Activated CD4-positive, alpha-beta memory T cell treated with anti-CD3 and anti-CD28 coated beads for 36 hours (primary cell): ENCODE measurements at regions of chr6 and their contacts with region 1.

Region 1: DNA sequence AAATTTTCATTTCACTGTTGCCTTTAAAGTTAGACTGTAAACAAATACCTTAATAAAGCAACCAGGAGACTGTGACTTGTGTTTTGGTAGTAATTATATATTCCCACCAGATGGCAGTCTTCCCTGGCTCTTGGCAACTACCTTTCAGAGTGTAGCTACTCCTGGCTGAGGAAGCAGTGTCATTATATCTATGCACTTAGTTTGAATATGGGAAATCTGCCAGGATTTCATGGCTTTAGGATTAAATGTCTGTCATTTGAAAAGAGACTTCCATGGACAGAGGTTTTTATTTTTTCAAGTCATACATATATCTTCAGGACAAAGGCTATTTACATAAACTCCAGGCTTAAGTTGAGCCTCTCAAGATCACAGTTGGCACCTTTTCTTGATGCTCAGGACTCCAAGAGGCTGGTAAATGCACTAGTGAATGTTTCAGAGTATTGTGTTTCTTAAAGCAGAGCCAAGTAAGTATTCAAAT is 160.1 kb downstream of the C6orf58 start:
- DNase-seq: peak; percentile 30
- H3K4me3 Mint-ChIP-seq: no peak overlapping the region
- H3K27ac Mint-ChIP-seq: peak overlapping the region; percentile 25
- H3K4me1 Mint-ChIP-seq: peaks cover 44% of the 10 kb centered on the region
- H3K27me3 Mint-ChIP-seq: no peaks in the 10 kb centered on the region

Region 2: DNA sequence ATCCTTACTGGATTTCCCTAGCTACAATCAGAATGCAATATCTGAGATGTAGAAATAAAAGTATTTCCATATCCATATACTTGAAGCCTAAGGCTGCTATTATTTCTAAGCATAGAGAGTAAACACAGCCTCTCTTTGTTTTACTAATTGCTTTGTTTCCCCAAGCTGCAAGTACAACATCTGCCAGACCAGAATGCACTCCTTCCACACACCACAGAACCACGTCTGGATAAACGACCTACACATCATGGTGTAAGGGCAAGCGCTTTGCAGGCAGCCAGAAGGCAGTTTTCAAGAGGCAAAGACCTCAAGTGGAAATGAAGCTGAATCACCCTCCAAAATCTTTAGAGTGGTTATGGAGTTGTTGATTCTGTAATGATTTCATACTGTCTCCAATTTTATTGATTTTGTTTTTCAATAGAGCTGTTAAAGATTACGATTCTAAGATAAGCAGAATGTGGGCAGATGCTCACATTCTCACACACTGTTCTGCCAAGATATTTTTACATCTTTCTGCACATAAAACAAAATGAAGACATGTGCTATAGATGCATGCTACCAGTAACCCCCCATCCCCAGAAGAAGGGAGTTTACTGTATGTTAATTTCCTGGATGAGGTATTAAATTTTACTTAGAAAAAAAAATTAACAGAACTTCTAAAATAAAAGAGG is 75.0 kb after region 1 on chr6:
- CTCF ChIA-PET with region 1: interaction called, 4 read pairs
- POLR2A ChIA-PET with region 1: no interaction called
- intact Hi-C with region 1: loop called (anchors 2 kb)
- DNase-seq: peak; percentile 30
- H3K4me3 Mint-ChIP-seq: peak overlapping the region; percentile 20
- H3K27ac Mint-ChIP-seq: no peak overlapping the region
- H3K4me1 Mint-ChIP-seq: peaks cover 87% of the 10 kb centered on the region
- H3K27me3 Mint-ChIP-seq: no peaks in the 10 kb centered on the region

Region 3: DNA sequence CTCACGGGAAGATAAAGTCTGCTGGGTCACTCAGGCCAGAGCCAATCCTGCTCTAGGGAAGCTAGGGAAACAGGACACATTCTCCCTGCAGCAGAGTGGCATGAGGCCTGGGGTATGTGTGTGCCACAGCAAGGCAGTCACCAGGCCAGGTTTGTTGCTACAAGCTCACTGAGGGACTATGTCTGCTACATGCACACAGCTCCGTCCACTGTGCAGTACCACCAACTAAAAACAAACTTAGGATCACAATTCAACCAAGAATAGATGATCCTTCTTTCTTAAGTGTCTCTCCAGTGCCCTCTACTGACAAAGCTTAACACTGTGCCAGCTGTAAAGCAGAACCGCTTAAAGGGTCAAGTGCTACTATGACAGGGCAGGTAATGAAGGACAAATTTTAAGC is 590.8 kb after region 1 on chr6:
- CTCF ChIA-PET with region 1: interaction called, 52 read pairs
- POLR2A ChIA-PET with region 1: no interaction called
- intact Hi-C with region 1: loop called (anchors 1 kb)
- DNase-seq: peak; percentile 24
- H3K4me3 Mint-ChIP-seq: no peak overlapping the region
- H3K27ac Mint-ChIP-seq: no peak overlapping the region
- H3K4me1 Mint-ChIP-seq: no peaks in the 10 kb centered on the region
- H3K27me3 Mint-ChIP-seq: no peaks in the 10 kb centered on the region

Region 4: GRCh38 chr6:128731249-128732165 is 994.5 kb after region 1 on chr6:
- CTCF ChIA-PET with region 1: no interaction called
- POLR2A ChIA-PET with region 1: no interaction called
- intact Hi-C with region 1: loop called (anchors 5 kb)
- DNase-seq: no peak
- H3K4me3 Mint-ChIP-seq: no peak overlapping the region
- H3K27ac Mint-ChIP-seq: no peak overlapping the region
- H3K4me1 Mint-ChIP-seq: no peaks in the 10 kb centered on the region
- H3K27me3 Mint-ChIP-seq: peaks cover 9% of the 10 kb centered on the region